Posterior vena cava (tissue), 2 donors: ENCODE measurements at regions of chr2 and their contacts with region 1.

Region 1: DNA sequence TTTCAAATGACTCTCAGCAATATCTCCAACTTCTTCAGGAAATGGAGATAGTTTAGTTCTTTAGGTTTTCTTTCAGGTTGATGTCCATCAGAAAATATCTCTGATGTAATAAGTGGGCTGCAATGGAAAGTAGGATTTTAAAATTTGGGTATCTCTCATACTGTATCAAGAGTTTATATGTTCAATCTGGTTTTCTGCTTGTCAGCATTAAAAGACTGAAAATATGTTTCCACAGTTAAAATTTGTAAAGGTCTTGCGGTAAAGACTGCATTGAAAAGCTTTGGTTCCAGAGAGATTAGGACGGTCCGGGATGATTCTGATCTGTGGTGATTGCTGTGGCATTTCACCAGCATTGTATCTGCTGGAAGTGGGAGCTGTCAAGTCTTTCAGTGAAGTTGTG is 83.2 kb downstream of the LYPD1 start:
- DNase-seq: no peak

Region 2: DNA sequence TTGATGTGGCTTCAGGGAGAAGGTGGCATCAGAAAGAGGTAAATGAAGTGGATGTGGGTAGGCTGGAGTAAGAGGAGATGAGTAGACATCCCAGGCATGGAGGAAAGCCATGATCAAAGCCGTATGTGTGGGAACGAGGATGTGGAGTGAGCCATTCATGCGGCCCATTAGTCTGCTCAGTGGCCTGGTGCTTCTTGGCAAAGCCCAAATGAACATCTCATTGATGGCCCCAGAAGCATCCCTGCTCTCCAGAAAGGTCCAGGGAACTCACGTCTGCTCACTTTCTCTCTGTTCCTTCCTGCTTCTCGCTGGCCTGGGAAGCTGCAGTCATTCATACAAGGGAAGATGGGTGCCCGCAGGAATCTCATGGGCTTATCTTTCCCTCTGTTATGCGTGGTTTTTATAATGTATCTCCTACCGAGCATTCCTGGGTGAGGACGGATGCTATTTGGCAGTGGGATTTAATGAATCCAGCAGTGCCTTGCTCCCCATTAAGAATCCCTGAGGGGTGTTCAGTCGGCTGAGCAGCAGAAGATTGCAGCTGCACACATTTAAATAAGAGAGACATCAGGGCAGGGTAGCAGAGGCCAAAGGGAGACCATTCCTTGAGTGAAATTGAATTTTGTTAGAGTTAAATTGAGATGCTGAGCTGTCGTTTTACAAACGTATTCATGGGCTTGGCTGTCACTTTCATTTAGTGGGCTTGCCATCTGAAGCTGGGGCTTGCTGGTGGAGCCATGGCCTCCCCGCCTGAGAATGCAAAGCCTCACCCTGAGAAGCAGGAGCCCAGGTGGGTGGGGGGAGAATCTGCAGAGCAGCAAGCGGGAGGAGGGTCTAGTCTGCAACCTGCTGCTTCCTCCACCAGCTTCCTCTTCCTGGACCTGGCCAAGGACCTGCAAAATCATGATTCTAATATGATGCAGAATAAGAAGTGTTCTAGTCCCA is 18.7 kb after region 1 on chr2:
- intact Hi-C with region 1: loop called in 1 of 2 experiments (anchors 1 kb)
- DNase-seq: peak; percentile 40